HEK293 (cell line): ENCODE measurements at regions of chr16 and their contacts with region 1.

Region 1: GRCh38 chr16:28277537-28278388 is 14.6 kb upstream of the SBK1 start:
- H3K4me3 ChIP-seq: peak overlapping the region; percentile 46
- H3K27ac ChIP-seq: no peak overlapping the region
- H3K4me1 ChIP-seq: no peaks in the 10 kb centered on the region
- CTCF ChIP-seq: peak; percentile 96

Region 2: GRCh38 chr16:28261942-28262341 is 15.8 kb before region 1 on chr16:
- CTCF ChIA-PET with region 1: interaction called, 16 read pairs
- POLR2A ChIA-PET with region 1: interaction called, 3 read pairs
- H3K4me3 ChIP-seq: no peak overlapping the region
- H3K27ac ChIP-seq: no peak overlapping the region
- H3K4me1 ChIP-seq: no peaks in the 10 kb centered on the region
- CTCF ChIP-seq: no peak

Region 3: GRCh38 chr16:28289048-28289447 is 11.3 kb after region 1 on chr16:
- CTCF ChIA-PET with region 1: interaction called, 17 read pairs
- POLR2A ChIA-PET with region 1: interaction called, 3 read pairs
- H3K4me3 ChIP-seq: no peak overlapping the region
- H3K27ac ChIP-seq: no peak overlapping the region
- H3K4me1 ChIP-seq: no peaks in the 10 kb centered on the region
- CTCF ChIP-seq: no peak

Region 4: GRCh38 chr16:28317040-28317880 is 39.5 kb after region 1 on chr16:
- CTCF ChIA-PET with region 1: interaction called, 125 read pairs
- POLR2A ChIA-PET with region 1: no interaction called
- H3K4me3 ChIP-seq: no peak overlapping the region
- H3K27ac ChIP-seq: no peak overlapping the region
- H3K4me1 ChIP-seq: no peaks in the 10 kb centered on the region
- CTCF ChIP-seq: peak; percentile 87